MCF 10A (cell line): ENCODE measurements at regions of chr6 and their contacts with region 1.

Region 1: GRCh38 chr6:79421707-79422484 is 115.3 kb downstream of the LCA5 start:
- DNase-seq: peak; percentile 95
- H3K4me3 Mint-ChIP-seq: peak overlapping the region; percentile 28
- H3K27ac Mint-ChIP-seq: peak overlapping the region; percentile 85
- H3K4me1 Mint-ChIP-seq: peaks cover 29% of the 10 kb centered on the region
- H3K27me3 Mint-ChIP-seq: no peaks in the 10 kb centered on the region
- CTCF ChIP-seq: no peak

Region 2: GRCh38 chr6:79438030-79438429 is 16.1 kb after region 1 on chr6:
- CTCF ChIA-PET with region 1: interaction called, 3 read pairs
- POLR2A ChIA-PET with region 1: interaction called, 13 read pairs
- intact Hi-C with region 1: no loop called
- DNase-seq: peak; percentile 47
- H3K4me3 Mint-ChIP-seq: no peak overlapping the region
- H3K27ac Mint-ChIP-seq: peak overlapping the region; percentile 72
- H3K4me1 Mint-ChIP-seq: peaks cover 31% of the 10 kb centered on the region
- H3K27me3 Mint-ChIP-seq: no peaks in the 10 kb centered on the region
- CTCF ChIP-seq: no peak